ENCODE measurements at regions of chr11 and their contacts with region 1.

Region 1: DNA sequence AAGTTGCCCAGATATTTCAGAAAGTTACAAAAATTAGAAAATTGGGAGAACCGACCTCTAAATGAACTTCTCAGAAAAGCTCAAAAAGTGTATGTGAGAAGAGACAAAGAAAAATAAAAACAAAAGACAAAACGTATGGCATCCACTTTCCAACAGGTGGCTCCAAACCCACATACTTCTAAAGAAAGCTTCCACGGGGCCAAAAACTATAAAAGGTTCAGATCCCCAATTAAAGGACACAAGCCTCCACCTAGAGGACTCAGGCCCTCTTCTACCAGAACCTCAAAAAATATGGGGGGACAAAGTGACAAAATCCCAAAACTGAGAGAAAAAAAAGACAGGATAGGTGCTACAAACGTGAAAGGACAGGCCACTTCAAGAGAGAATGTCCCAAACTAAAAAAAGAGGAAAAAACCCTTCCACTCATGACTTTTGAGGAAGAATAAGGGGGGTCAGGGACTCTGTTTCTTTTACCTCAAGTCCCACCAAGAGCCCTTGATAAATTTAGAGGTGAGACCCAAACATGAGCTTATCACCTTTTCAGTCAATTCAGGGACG is 8.8 kb downstream of the SCGB2A1 start:
- DNase-seq: no peak
- ATAC-seq: no peak
- H3K4me3 ChIP-seq: no peak overlapping the region
- H3K27ac ChIP-seq: no peak overlapping the region
- H3K4me1 ChIP-seq: no peaks in the 10 kb centered on the region
- H3K27me3 ChIP-seq: peaks cover 13% of the 10 kb centered on the region
- CTCF ChIP-seq: peak; percentile 49
- POLR2A ChIP-seq: no peak
- RAD21 ChIP-seq: peak; percentile 44

Region 2: DNA sequence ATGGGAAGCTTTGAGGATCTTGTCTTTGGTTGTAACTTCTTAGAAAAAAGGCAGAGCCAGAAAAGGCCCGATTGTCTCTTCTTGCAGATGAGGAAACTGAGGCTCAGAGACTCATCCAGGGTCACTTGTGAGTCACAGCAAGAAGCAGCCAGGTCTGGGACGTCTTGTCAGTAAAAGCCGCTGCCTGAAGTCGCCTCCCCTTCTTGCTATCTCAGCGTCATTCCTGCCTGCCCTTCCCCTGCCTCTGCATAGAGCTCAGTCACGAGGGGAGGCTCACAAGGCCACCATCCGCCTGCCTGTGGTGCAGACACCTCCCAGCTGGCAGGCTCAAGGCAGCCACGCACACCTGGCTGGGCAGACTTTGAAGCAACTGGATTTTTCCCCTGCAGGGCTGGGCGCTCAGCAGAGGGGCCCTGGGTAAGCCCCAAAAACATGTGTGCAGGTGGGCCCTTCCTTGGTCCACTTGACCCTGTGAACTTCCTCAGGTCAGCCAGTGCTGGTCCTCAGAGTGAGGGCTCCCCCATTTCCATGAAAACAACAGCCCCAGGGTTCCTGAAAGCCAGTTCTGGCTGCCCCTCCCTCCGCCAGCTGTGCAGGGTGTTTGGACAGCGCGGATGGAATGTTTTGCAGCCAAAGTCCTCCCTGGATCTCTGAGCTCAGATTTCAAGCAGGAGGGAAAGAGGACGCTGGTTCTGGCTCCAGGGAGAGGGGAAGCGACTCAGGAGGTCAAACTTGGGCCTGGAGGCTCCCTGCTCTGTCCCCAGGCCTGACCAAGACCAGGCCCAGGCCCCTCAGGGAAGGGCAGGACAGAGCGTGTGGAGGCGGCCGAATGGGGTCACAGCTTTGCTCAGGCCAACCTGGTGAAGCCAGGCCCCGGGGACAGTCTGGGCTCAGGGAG is 293.9 kb before region 1 on chr11:
- CTCF ChIA-PET with region 1: no interaction called
- POLR2A ChIA-PET with region 1: no interaction called
- dilution Hi-C with region 1: no loop called
- in situ Hi-C with region 1: no loop called
- intact Hi-C with region 1: no loop called
- DNase-seq: peak; percentile 63
- ATAC-seq: peak; percentile 90
- H3K4me3 ChIP-seq: no peak overlapping the region
- H3K27ac ChIP-seq: peak overlapping the region; percentile 80; the same call in 1 of the 2 replicates
- H3K4me1 ChIP-seq: peaks cover 14% of the 10 kb centered on the region; the same call in 1 of the 2 replicates
- H3K27me3 ChIP-seq: peaks cover 19% of the 10 kb centered on the region
- CTCF ChIP-seq: no peak
- POLR2A ChIP-seq: no peak
- RAD21 ChIP-seq: no peak

Region 3: DNA sequence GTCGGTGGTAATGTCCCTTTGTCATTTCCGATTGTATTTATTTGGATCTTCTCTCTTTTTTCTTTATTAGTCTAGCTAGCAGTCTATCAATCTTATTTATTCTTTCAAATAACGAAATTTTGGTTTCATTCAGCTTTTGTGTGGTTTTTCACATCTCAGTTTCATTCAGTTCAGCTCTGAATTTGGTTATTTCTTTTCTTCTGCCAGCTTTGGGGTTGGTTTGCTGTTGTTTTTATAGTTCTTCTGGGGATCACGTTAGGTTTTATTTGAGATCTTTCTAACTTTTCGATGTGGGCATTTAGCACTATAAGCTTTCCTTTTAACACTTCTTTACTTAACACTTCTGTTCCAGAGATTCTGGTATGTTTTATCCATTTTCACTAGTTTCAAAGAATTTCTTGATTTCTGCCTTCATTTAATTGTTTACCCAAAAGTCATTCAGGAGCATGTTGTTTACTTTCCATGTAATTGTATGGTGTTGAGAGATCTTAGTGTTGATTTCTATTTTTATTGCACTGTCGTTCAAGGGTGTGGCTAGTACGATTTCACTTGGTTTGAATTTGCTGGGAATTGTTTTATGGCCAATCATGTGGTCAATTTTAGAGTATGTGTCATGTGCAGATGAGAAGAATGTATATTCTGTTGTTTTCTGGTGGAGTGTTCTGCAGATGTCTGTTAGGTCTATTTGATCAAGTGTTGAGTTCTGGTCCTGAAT is 35.0 kb before region 1 on chr11:
- CTCF ChIA-PET with region 1: no interaction called
- POLR2A ChIA-PET with region 1: no interaction called
- dilution Hi-C with region 1: no loop called
- in situ Hi-C with region 1: no loop called
- intact Hi-C with region 1: loop called (anchors 2 kb)
- DNase-seq: no peak
- ATAC-seq: no peak
- H3K4me3 ChIP-seq: no peak overlapping the region
- H3K27ac ChIP-seq: no peak overlapping the region
- H3K4me1 ChIP-seq: no peaks in the 10 kb centered on the region
- H3K27me3 ChIP-seq: peaks cover 8% of the 10 kb centered on the region
- CTCF ChIP-seq: no peak
- POLR2A ChIP-seq: no peak
- RAD21 ChIP-seq: no peak

Region 4: GRCh38 chr11:62372871-62373270 is 155.6 kb after region 1 on chr11:
- CTCF ChIA-PET with region 1: no interaction called
- POLR2A ChIA-PET with region 1: no interaction called
- dilution Hi-C with region 1: no loop called
- in situ Hi-C with region 1: no loop called
- intact Hi-C with region 1: loop called (anchors 5 kb)
- DNase-seq: no peak
- ATAC-seq: no peak
- H3K4me3 ChIP-seq: no peak overlapping the region
- H3K27ac ChIP-seq: no peak overlapping the region
- H3K4me1 ChIP-seq: no peaks in the 10 kb centered on the region
- H3K27me3 ChIP-seq: peaks cover 14% of the 10 kb centered on the region
- CTCF ChIP-seq: no peak
- POLR2A ChIP-seq: no peak
- RAD21 ChIP-seq: no peak

Region 5: GRCh38 chr11:62479631-62480201 is 262.4 kb after region 1 on chr11:
- CTCF ChIA-PET with region 1: no interaction called
- POLR2A ChIA-PET with region 1: interaction called, 17 read pairs
- dilution Hi-C with region 1: no loop called
- in situ Hi-C with region 1: no loop called
- intact Hi-C with region 1: no loop called
- DNase-seq: no peak
- ATAC-seq: no peak
- H3K4me3 ChIP-seq: no peak overlapping the region
- H3K27ac ChIP-seq: peak overlapping the region; percentile 16; the same call in 1 of the 2 replicates
- H3K4me1 ChIP-seq: peaks cover 10% of the 10 kb centered on the region
- H3K27me3 ChIP-seq: no peaks in the 10 kb centered on the region
- CTCF ChIP-seq: no peak
- POLR2A ChIP-seq: no peak
- RAD21 ChIP-seq: no peak